ENCODE measurements at regions of chr19 and their contacts with region 1.

Region 1: GRCh38 chr19:48842789-48843162 is 6.5 kb upstream of the HSD17B14 start:
- DNase-seq: peak; percentile 62
- ATAC-seq: peak; percentile 53
- H3K4me3 Mint-ChIP-seq: no peak overlapping the region
- H3K27ac Mint-ChIP-seq: no peak overlapping the region
- H3K4me1 Mint-ChIP-seq: no peaks in the 10 kb centered on the region
- H3K27me3 Mint-ChIP-seq: no peaks in the 10 kb centered on the region

Region 2: DNA sequence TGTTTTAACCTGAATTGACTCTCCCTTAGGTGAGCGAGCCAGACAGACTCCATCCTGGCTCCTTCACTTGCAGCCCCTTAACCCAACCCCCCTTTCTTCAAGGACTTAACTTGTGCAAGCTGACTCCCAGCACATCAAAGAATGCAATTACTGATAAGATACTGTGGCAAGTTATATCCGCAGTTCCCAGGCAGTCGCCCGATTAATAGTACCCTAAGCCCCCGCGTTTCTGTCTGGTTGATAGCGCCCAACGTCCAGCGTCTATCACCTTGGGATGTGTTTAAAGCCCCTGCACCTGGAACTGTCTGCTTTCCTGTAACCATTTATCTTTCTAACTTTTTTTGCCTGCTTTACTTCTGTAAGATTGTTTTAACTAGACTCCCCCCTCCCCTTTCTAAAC is 12.7 kb before region 1 on chr19:
- CTCF ChIA-PET with region 1: interaction called, 17 read pairs
- POLR2A ChIA-PET with region 1: no interaction called
- intact Hi-C with region 1: no loop called
- DNase-seq: no peak
- ATAC-seq: no peak
- H3K4me3 Mint-ChIP-seq: no peak overlapping the region
- H3K27ac Mint-ChIP-seq: no peak overlapping the region
- H3K4me1 Mint-ChIP-seq: no peaks in the 10 kb centered on the region
- H3K27me3 Mint-ChIP-seq: no peaks in the 10 kb centered on the region

Region 3: DNA sequence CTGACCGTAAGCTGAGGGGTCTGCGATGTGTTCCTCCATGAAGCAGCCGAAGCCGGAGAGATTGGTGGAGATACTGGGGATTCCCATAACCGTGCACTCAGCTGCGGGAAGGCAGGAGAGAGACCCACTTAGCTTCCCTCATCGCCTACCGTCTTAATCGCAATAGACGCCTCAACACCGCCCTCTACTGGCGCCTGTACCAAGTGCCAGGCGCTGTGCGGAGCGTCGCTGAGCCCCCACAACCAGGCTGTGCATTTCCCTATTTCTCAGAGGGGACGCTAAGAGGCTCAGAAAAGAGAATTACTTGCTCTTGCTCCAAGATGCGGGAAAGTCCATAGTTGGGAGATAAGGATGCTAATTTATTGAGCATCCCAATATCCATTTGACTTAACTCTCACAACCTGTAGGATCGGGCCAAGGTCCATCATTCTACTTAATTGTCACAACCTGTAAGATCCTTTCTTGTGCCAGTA is 128.2 kb after region 1 on chr19:
- CTCF ChIA-PET with region 1: interaction called, 12 read pairs
- POLR2A ChIA-PET with region 1: no interaction called
- intact Hi-C with region 1: no loop called
- DNase-seq: peak; percentile 91
- ATAC-seq: peak; percentile 84
- H3K4me3 Mint-ChIP-seq: no peak overlapping the region
- H3K27ac Mint-ChIP-seq: no peak overlapping the region
- H3K4me1 Mint-ChIP-seq: peaks cover 17% of the 10 kb centered on the region
- H3K27me3 Mint-ChIP-seq: no peaks in the 10 kb centered on the region

Measured in activated CD4-positive, alpha-beta T cell treated with anti-CD3 and anti-CD28 coated beads for 36 hours (primary cell).